Spleen (tissue), 13 donors: ENCODE measurements at regions of chr6 and their contacts with region 1.

Region 1: GRCh38 chr6:56902641-56903464 is 52.1 kb upstream of the BEND6 start:
- DNase-seq: no peak
- H3K4me3 ChIP-seq: no peak overlapping the region
- H3K27ac ChIP-seq: peak overlapping the region in 1 of 8 donors; percentile 26
- H3K4me1 ChIP-seq: peaks cover 0 to 8% (median 4%) of the 10 kb centered on the region in 6 donors
- H3K27me3 ChIP-seq: no peaks in the 10 kb centered on the region
- CTCF ChIP-seq: peak; percentile 28 to 67 (median 56)
- POLR2A ChIP-seq: no peak

Region 2: GRCh38 chr6:55410674-55411073 is 1492.2 kb before region 1 on chr6:
- intact Hi-C with region 1: no loop called
- DNase-seq: no peak
- H3K4me3 ChIP-seq: no peak overlapping the region
- H3K27ac ChIP-seq: no peak overlapping the region
- H3K4me1 ChIP-seq: no peaks in the 10 kb centered on the region
- H3K27me3 ChIP-seq: no peaks in the 10 kb centered on the region
- CTCF ChIP-seq: no peak
- POLR2A ChIP-seq: no peak

Region 3: GRCh38 chr6:56484669-56485068 is 418.2 kb before region 1 on chr6:
- intact Hi-C with region 1: no loop called
- DNase-seq: no peak
- H3K4me3 ChIP-seq: no peak overlapping the region
- H3K27ac ChIP-seq: no peak overlapping the region
- H3K4me1 ChIP-seq: no peaks in the 10 kb centered on the region
- H3K27me3 ChIP-seq: no peaks in the 10 kb centered on the region
- CTCF ChIP-seq: no peak
- POLR2A ChIP-seq: no peak

Region 4: GRCh38 chr6:57021086-57021720 is 118.3 kb after region 1 on chr6:
- intact Hi-C with region 1: loop called (anchors 10 kb)
- DNase-seq: no peak
- H3K4me3 ChIP-seq: no peak overlapping the region
- H3K27ac ChIP-seq: no peak overlapping the region
- H3K4me1 ChIP-seq: no peaks in the 10 kb centered on the region
- H3K27me3 ChIP-seq: no peaks in the 10 kb centered on the region
- CTCF ChIP-seq: peak in 9 of 11 experiments; percentile 14 to 56 (median 46)
- POLR2A ChIP-seq: no peak

Region 5: GRCh38 chr6:57316581-57317059 is 413.8 kb after region 1 on chr6:
- intact Hi-C with region 1: loop called (anchors 5 kb)
- DNase-seq: peak; percentile 90
- H3K4me3 ChIP-seq: peak overlapping the region; percentile 59 to 88 (median 68)
- H3K27ac ChIP-seq: peak overlapping the region; percentile 37 to 80 (median 72)
- H3K4me1 ChIP-seq: peaks cover 6 to 32% (median 14%) of the 10 kb centered on the region in 6 donors
- H3K27me3 ChIP-seq: peaks cover 0 to 6% (median 0%) of the 10 kb centered on the region in 7 donors
- CTCF ChIP-seq: peak; percentile 50 to 79 (median 69)
- POLR2A ChIP-seq: no peak